ENCODE measurements at regions of chr17 and their contacts with region 1.

Region 1: GRCh38 chr17:50200457-50201275 is 765 bp downstream of the COL1A1 start:
- DNase-seq: peak; percentile 88
- H3K4me3 Mint-ChIP-seq: peak overlapping the region; percentile 56
- H3K27ac Mint-ChIP-seq: no peak overlapping the region
- H3K4me1 Mint-ChIP-seq: peaks cover 17% of the 10 kb centered on the region
- H3K27me3 Mint-ChIP-seq: peaks cover 35% of the 10 kb centered on the region

Region 2: GRCh38 chr17:49822829-49823228 is 377.8 kb before region 1 on chr17:
- CTCF ChIA-PET with region 1: no interaction called
- intact Hi-C with region 1: no loop called
- DNase-seq: no peak
- H3K4me3 Mint-ChIP-seq: no peak overlapping the region
- H3K27ac Mint-ChIP-seq: no peak overlapping the region
- H3K4me1 Mint-ChIP-seq: peaks cover 31% of the 10 kb centered on the region
- H3K27me3 Mint-ChIP-seq: no peaks in the 10 kb centered on the region

Region 3: GRCh38 chr17:50114849-50115357 is 85.8 kb before region 1 on chr17:
- CTCF ChIA-PET with region 1: interaction called, 5 read pairs
- intact Hi-C with region 1: loop called (anchors 1 kb)
- DNase-seq: peak; percentile 76
- H3K4me3 Mint-ChIP-seq: no peak overlapping the region
- H3K27ac Mint-ChIP-seq: no peak overlapping the region
- H3K4me1 Mint-ChIP-seq: peaks cover 7% of the 10 kb centered on the region
- H3K27me3 Mint-ChIP-seq: peaks cover 26% of the 10 kb centered on the region

Region 4: DNA sequence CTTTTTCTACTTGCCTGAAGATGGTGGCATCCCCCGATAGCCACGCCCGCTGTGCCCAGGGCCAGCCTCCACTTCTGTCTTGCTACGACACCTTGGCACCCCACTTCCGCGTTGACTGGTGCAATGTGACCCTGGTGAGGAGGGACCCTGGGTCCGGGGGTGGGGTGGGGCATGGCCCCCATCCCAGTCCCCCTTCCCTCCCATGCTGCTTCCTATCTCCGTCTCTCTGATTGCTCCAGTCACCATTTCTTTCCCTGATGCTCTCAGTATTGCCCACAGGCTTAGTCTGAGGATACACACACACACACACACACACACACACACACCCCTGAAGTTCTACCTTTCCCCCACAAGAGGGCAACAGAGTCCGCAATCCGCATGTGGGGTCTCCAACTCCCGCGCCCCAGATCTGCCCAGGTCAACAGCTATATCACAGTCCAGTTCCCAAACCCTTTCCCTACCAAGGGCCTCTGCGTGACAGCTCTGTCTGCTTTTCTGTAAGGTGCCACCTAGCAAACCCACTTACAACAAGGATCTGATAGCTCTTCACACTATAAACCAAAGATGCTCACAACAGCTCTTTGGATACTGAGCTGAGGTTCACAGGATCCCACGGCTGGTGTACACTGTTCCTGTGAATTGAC is 31.4 kb before region 1 on chr17:
- CTCF ChIA-PET with region 1: interaction called, 49 read pairs
- intact Hi-C with region 1: loop called (anchors 1 kb)
- DNase-seq: peak; percentile 57
- H3K4me3 Mint-ChIP-seq: peak overlapping the region; percentile 46
- H3K27ac Mint-ChIP-seq: no peak overlapping the region
- H3K4me1 Mint-ChIP-seq: peaks cover 10% of the 10 kb centered on the region
- H3K27me3 Mint-ChIP-seq: no peaks in the 10 kb centered on the region

Region 5: DNA sequence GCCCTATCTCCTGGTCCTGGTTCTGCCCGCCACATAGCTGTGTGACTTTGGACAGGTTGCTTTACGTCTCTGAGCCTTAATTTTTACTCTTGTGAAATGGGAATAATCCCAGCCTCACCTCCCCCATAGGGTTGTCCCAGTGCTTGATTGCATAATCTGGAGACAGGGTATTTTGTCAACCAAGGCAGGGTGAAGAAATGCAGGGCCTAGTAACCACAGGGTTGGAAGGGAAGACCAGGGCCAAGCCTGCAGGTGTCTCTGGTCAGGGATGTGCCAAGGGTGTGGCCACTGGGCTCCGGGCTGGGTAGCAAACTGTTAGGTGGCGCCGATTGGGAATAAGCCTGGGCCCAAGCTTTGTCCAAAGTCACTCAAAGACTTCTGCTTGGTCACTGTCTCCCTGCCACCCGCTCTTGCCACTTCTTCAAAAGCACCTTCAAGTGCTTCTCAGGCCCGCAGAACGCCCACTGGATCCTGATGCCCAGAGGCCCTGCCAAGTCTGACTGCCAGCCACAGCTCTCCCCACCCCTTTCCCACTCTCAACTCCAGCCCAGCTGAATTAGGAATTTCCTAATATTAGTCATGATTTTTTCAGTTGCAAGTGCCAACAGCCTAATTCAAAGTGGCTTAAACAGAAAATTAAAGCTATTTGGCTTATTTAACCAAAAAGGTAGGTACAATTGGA is 21.3 kb after region 1 on chr17:
- CTCF ChIA-PET with region 1: interaction called, 87 read pairs
- intact Hi-C with region 1: no loop called
- DNase-seq: no peak
- H3K4me3 Mint-ChIP-seq: no peak overlapping the region
- H3K27ac Mint-ChIP-seq: no peak overlapping the region
- H3K4me1 Mint-ChIP-seq: peaks cover 16% of the 10 kb centered on the region
- H3K27me3 Mint-ChIP-seq: no peaks in the 10 kb centered on the region

Region 6: GRCh38 chr17:50297407-50297865 is 96.8 kb after region 1 on chr17:
- CTCF ChIA-PET with region 1: interaction called, 151 read pairs
- intact Hi-C with region 1: loop called (anchors 1 kb)
- DNase-seq: peak; percentile 89
- H3K4me3 Mint-ChIP-seq: no peak overlapping the region
- H3K27ac Mint-ChIP-seq: no peak overlapping the region
- H3K4me1 Mint-ChIP-seq: no peaks in the 10 kb centered on the region
- H3K27me3 Mint-ChIP-seq: peaks cover 3% of the 10 kb centered on the region

Region 7: GRCh38 chr17:50331085-50331791 is 130.6 kb after region 1 on chr17:
- CTCF ChIA-PET with region 1: interaction called, 11 read pairs
- intact Hi-C with region 1: loop called (anchors 1 kb)
- DNase-seq: no peak
- H3K4me3 Mint-ChIP-seq: no peak overlapping the region
- H3K27ac Mint-ChIP-seq: no peak overlapping the region
- H3K4me1 Mint-ChIP-seq: peaks cover 14% of the 10 kb centered on the region
- H3K27me3 Mint-ChIP-seq: no peaks in the 10 kb centered on the region